Sciatic nerve (tissue), 2 donors: ENCODE measurements at regions of chr15 and their contacts with region 1.

Region 1: DNA sequence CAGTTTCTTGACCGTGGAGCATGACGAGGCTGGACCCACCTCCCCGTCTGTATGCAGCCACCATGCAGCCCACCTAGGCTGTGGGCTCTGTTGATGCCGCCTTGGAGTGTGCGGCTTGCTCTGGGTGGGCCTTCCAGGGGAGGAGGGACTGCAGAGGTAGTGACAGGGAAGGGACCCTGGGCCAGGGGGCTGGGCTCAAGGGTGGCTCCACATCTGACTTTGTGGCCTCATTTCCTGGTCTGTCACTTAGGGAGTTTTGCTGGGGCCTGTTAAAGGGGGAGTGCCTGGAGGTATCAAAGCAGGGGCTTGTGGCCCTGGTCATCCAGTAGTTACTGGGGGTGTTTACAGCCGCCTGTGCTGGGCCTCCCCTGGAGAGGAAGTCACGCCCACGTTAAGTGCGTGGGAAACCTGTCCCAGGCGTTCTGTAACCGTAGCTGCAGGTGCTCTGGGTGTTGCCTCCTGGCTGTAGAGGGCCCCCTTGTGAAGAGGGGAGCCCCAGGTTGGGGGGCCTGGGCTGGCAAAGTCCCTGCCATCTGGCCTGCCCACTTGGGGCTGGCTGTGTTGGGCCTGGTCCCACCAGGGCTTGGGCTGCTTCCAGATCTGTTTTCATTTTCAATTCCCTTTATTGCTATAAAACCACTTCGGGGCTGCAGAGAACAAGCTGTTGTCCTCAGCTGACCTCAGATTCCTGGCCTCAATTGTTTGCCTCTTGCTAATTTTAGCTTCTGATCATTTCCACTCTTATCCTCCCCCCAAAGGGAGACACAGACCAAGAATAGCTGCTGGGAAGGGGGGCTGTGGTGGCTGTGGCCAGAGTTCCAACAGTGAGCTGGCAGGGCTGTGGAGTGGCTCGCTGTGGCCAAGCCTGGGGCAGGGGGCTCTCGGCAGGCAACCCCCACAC is 26.5 kb downstream of the KLF13 start:
- DNase-seq: peak; percentile 73
- ATAC-seq: peak; percentile 85

Region 2: GRCh38 chr15:30859091-30859874 is 493.9 kb before region 1 on chr15:
- intact Hi-C with region 1: loop called (anchors 5 kb)
- DNase-seq: no peak
- ATAC-seq: no peak

Region 3: DNA sequence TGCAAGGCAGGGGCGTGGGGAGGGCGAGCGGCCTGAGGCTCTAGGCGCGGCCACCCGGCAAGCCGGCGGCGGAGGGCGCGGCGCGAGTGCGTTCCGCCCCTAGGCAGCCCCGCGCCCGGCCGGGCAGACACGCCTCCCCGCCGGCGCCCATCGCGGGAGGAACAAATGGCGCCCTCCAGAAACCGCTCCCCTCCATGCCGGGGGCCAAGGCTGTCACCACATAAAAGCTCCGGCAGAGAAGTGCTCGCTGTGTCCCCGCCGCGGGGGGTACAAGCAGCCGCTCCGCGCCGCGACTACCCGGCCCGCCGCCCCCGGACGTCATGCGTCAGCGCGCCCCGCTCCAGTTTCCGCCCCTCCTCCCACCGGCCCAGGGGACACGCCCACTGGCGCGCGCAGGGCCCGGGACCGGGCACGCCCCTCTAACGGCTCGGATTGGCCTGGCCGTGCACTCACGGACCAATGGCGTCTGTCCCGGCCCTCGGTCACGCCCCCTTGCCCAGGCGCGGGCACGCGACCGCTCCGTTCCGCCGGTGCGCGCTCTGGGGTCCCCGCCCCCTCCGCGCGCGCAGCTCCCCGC is 26.9 kb before region 1 on chr15:
- intact Hi-C with region 1: loop called (anchors 1 kb)
- DNase-seq: peak; percentile 100
- ATAC-seq: peak; percentile 96